ENCODE measurements at regions of chr16 and their contacts with region 1.

Region 1: DNA sequence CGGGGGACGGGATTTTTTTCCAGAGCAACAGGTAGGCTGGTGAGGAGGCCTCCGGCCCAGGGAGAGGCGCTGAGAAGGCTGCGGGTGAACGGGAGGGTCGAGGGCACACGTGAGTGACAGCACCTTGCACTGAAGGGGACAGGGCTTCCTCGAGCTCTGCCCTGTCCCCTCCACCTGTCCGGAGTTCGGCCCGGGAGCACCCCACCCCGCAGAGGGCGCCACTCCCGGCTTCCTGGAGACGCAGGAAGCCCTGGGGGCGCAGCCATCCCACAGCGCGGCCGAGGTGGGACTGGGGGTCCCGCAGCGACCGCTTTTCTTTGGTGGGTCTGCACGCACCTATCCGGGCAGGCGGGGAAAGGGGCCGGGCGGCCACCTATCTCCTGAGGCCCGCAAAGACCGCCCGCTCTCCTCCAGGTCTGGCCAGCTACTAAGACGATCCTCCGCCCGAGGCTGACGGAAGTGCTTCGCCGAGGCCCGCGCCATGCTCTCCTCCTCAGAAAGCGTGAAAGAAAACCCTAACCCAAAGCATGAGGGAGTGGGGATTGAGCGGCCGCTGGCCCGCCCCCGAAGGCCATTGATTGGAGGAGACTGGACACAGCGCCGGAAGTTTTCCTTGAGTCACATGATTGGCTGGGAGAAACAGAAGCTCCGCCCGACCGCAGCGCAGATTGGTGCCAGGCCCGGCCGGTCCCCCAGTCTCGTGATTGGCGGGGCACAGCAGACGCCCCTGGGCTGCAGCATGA is 34.3 kb downstream of the DDX19A start:
- DNase-seq: peak; percentile 96 to 98 (median 98)
- ATAC-seq: peak; percentile 97
- H3K4me3 ChIP-seq: peak overlapping the region; percentile 57
- H3K27ac ChIP-seq: peak overlapping the region; percentile 76
- H3K4me1 ChIP-seq: no peaks in the 10 kb centered on the region
- H3K27me3 ChIP-seq: no peaks in the 10 kb centered on the region

Region 2: GRCh38 chr16:70438969-70439862 is 58.2 kb after region 1 on chr16 and contains the start of gene ST3GAL2:
- intact Hi-C with region 1: loop called in 2 of 4 experiments (anchors 10 kb)
- DNase-seq: peak; percentile 96 to 99 (median 99)
- ATAC-seq: peak; percentile 98 to 99
- H3K4me3 ChIP-seq: peak within 1 kb of the TSS; percentile 93
- H3K27ac ChIP-seq: peak within 1 kb of the TSS; percentile 68
- H3K4me1 ChIP-seq: peaks cover 16% of the 10 kb centered on the region
- H3K27me3 ChIP-seq: no peaks in the 10 kb centered on the region
- total RNA-seq, gene ST3GAL2: 15.4 to 21.3 (median 19.9) TPM